GM12878 (cell line): ENCODE measurements at regions of chr12 and their contacts with region 1.

Region 1: DNA sequence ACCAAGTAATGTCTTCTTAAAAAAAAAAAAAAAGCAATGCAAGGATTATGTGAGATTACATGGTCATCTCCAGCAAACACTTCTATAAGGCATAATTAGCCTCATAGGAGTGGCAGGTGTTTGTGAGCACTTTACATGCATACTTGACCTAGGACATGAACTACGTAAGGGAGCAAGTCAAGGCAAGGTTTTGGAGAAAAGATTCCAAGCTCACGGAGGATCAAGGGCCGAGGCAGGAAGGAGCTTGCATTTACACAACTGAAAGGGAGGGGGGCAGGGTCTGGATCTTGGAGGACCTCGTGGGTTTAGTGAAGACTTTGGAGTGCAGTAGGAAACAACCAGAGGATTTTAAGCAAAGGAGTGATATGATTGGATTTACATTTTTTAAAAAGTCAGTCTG is 112.5 kb downstream of the CCER1 start:
- DNase-seq: no peak
- ATAC-seq: no peak
- H3K4me3 ChIP-seq: no peak overlapping the region
- H3K27ac ChIP-seq: no peak overlapping the region
- H3K4me1 ChIP-seq: no peaks in the 10 kb centered on the region
- H3K27me3 ChIP-seq: no peaks in the 10 kb centered on the region
- CTCF ChIP-seq: no peak
- EP300 ChIP-seq: no peak
- POLR2A ChIP-seq: no peak
- RAD21 ChIP-seq: no peak

Region 2: DNA sequence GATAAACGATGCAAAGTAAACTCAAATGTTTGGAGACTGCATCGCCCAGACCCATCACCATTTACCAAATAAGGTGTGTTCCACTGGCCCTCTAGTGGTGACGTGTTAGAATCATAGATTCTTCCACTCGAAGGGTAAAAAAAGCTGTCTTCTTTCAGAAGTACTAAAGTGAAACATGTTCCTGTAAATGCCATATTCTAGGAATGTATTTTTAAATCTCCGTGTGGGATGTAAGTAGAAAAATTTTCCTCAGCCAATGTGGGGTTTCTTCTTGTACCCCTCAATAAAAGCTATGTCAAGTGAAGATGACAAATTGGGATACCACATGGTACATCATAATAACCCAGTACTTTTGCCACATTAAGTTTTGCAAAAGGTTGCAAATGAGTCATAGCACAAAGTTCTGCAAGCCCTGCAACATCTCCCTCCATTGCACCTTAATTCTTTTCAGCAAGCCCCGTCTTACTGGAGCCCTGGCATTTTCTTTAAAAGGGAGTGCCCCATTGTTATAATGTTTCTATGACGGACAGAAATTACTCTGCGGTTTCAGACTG is 11.7 kb after region 1 on chr12:
- CTCF ChIA-PET with region 1: interaction called, 4 read pairs
- POLR2A ChIA-PET with region 1: no interaction called
- RAD21 ChIA-PET with region 1: no interaction called
- SMC1A ChIA-PET with region 1: interaction called, 3 read pairs
- in situ Hi-C with region 1: no loop called
- intact Hi-C with region 1: loop called (anchors 1 kb)
- DNase-seq: no peak
- ATAC-seq: peak; percentile 82
- H3K4me3 ChIP-seq: no peak overlapping the region
- H3K27ac ChIP-seq: no peak overlapping the region
- H3K4me1 ChIP-seq: no peaks in the 10 kb centered on the region
- H3K27me3 ChIP-seq: no peaks in the 10 kb centered on the region
- CTCF ChIP-seq: peak; percentile 62 to 76 (median 68)
- EP300 ChIP-seq: no peak
- POLR2A ChIP-seq: no peak
- RAD21 ChIP-seq: peak; percentile 66

Region 3: GRCh38 chr12:90899456-90900182 is 57.1 kb after region 1 on chr12:
- CTCF ChIA-PET with region 1: no interaction called
- POLR2A ChIA-PET with region 1: no interaction called
- RAD21 ChIA-PET with region 1: no interaction called
- SMC1A ChIA-PET with region 1: no interaction called
- in situ Hi-C with region 1: no loop called
- intact Hi-C with region 1: no loop called
- DNase-seq: no peak
- ATAC-seq: no peak
- H3K4me3 ChIP-seq: no peak overlapping the region
- H3K27ac ChIP-seq: no peak overlapping the region
- H3K4me1 ChIP-seq: no peaks in the 10 kb centered on the region
- H3K27me3 ChIP-seq: no peaks in the 10 kb centered on the region
- CTCF ChIP-seq: no peak
- EP300 ChIP-seq: no peak
- POLR2A ChIP-seq: no peak
- RAD21 ChIP-seq: no peak

Region 4: DNA sequence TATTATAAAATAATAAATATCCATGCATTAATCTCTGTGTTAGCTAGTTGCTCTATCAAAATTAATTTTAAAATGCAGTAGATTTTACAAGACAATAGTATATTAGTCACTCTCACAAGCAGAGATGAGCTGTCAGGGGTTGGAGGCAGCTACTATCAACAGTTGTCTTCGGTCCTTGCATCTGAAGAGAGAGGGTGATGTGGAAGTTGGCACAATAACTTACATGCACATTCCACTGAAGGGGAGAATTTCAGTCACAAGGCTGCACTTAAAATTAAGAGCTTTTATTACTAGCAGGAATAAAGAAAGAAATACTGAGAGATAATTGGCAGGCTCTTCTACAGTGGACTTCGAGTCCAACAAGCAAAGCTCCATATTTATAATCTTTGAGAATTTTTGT is 507.0 kb after region 1 on chr12:
- CTCF ChIA-PET with region 1: no interaction called
- POLR2A ChIA-PET with region 1: no interaction called
- RAD21 ChIA-PET with region 1: no interaction called
- SMC1A ChIA-PET with region 1: no interaction called
- in situ Hi-C with region 1: no loop called
- intact Hi-C with region 1: no loop called
- DNase-seq: no peak
- ATAC-seq: no peak
- H3K4me3 ChIP-seq: no peak overlapping the region
- H3K27ac ChIP-seq: no peak overlapping the region
- H3K4me1 ChIP-seq: no peaks in the 10 kb centered on the region
- H3K27me3 ChIP-seq: no peaks in the 10 kb centered on the region
- CTCF ChIP-seq: no peak
- EP300 ChIP-seq: no peak
- POLR2A ChIP-seq: no peak
- RAD21 ChIP-seq: no peak